B cell (primary cell): ENCODE measurements at regions of chr14 and their contacts with region 1.

Region 1: DNA sequence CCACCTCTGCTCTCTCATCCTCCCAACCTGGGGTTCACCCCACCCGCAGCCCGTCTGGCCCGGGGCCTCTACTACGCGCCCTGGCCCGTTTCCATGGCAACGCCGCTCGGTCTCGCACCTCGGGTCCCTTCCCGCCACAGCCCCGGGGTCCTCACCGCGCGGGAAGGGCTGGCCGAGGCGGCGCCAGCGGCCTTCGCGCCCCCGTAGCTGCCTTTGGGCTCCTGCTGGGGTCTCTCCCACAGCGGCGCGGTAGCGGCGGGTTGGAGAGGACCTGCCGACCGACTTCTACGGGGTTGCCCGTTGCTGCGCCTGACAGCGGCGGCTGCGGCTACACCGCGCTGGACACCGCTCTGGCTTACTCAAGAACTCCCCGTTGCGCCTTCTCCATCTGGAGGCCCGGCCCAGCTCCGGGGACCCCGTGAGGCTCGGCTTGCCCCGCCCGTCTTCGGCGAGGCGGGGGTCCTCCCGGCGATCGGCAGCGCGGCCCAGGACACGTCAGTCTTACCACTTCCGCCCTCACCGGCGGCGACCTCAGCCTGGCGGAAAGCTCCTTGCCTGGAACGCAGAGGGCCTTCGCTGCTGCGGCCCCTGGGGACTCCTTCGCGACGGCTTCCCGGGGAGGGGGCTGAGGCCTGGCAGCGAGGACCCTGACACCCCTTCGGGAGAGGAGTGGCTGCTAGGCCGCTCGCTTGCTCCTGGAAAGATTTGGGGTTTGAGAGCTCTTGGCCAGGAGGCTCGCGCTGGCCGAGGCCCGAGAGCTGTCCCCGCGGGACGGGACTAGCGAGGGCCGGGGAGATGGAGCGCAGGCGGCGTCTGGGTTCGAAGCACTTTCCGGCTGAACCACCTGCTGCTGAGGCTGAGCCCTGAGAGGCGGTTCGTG is at the start of gene TM9SF1:
- DNase-seq: peak; percentile 96
- ATAC-seq: peak; percentile 90
- H3K4me3 ChIP-seq: peak within 1 kb of the TSS; percentile 82 to 99 (median 83)
- H3K4me3 Mint-ChIP-seq: peak within 1 kb of the TSS; percentile 89
- H3K27ac ChIP-seq: peak within 1 kb of the TSS; percentile 98 to 99
- H3K27ac Mint-ChIP-seq: peak within 1 kb of the TSS; percentile 99
- H3K4me1 ChIP-seq: peaks cover 25 to 26% of the 10 kb centered on the region in 2 donors
- H3K4me1 Mint-ChIP-seq: peaks cover 49% of the 10 kb centered on the region
- H3K27me3 ChIP-seq: no peaks in the 10 kb centered on the region
- H3K27me3 Mint-ChIP-seq: no peaks in the 10 kb centered on the region
- CTCF ChIP-seq: no peak
- total RNA-seq, gene TM9SF1: 24.5 and 33.9 TPM in 2 replicates

Region 2: DNA sequence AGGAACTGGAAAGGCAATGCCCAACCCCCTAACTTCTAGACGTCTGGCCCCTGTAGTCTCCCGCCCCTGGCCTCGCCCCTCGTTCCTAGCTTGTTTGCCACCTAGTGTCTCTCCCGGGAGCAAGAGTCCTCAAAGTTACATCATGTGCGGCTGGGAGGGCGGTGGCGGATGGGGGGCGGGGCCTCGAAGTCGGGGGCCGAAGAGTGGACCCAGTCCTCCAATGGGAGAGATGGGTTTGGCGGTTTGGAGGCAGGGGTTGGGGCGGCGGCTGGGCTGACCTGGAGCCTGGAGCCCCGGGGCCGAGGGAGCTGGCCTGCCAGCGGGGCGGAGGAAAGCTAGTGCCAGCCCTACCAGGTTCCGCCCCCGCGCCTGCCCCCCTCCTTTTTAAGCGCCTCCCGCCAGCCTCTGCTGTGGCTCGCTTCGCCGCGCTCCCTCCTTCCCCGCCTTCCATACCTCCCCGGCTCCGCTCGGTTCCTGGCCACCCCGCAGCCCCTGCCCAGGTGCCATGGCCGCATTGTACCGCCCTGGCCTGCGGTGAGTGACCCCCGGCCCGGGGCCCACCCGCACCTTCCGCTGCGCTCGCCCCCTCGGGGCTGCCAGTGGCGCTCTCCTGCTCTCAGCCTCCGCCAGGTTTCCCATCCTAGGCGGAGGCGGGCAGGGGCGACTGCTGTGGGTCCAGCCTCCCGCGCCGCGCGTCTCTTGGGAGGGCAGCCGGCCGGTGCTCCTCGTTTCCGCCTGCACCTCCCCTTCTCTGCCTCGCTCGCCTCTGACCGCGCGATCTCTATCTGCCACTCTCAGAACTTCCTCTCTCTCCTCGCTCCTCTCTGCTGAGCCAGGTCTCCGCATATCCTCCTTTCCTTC is 101.3 kb before region 1 on chr14 and contains the start of gene PCK2:
- CTCF ChIA-PET with region 1: interaction called, 3 read pairs
- POLR2A ChIA-PET with region 1: no interaction called
- intact Hi-C with region 1: loop called (anchors 1 kb)
- DNase-seq: peak; percentile 81
- ATAC-seq: peak; percentile 66
- H3K4me3 ChIP-seq: peak within 1 kb of the TSS; percentile 62 to 97 (median 89)
- H3K4me3 Mint-ChIP-seq: peak within 1 kb of the TSS; percentile 95
- H3K27ac ChIP-seq: peak within 1 kb of the TSS; percentile 80 to 95
- H3K27ac Mint-ChIP-seq: peak within 1 kb of the TSS; percentile 92
- H3K4me1 ChIP-seq: peaks cover 5 to 35% of the 10 kb centered on the region in 2 donors
- H3K4me1 Mint-ChIP-seq: peaks cover 38% of the 10 kb centered on the region
- H3K27me3 ChIP-seq: no peaks in the 10 kb centered on the region
- H3K27me3 Mint-ChIP-seq: no peaks in the 10 kb centered on the region
- CTCF ChIP-seq: peak; percentile 28
- total RNA-seq, gene PCK2: 34.1 and 40.4 TPM in 2 replicates

Region 3: GRCh38 chr14:24141097-24141880 is 54.1 kb before region 1 on chr14 and contains the start of gene EMC9:
- CTCF ChIA-PET with region 1: no interaction called
- POLR2A ChIA-PET with region 1: interaction called, 13 read pairs
- intact Hi-C with region 1: loop called (anchors 1 kb)
- DNase-seq: peak; percentile 99
- ATAC-seq: peak; percentile 89
- H3K4me3 ChIP-seq: peak within 1 kb of the TSS; percentile 67 to 93 (median 82)
- H3K4me3 Mint-ChIP-seq: peak within 1 kb of the TSS; percentile 96
- H3K27ac ChIP-seq: peak within 1 kb of the TSS; percentile 63 to 80
- H3K27ac Mint-ChIP-seq: peak within 1 kb of the TSS; percentile 95
- H3K4me1 ChIP-seq: peaks cover 33 to 50% of the 10 kb centered on the region in 2 donors
- H3K4me1 Mint-ChIP-seq: peaks cover 64% of the 10 kb centered on the region
- H3K27me3 ChIP-seq: no peaks in the 10 kb centered on the region
- H3K27me3 Mint-ChIP-seq: no peaks in the 10 kb centered on the region
- CTCF ChIP-seq: peak; percentile 37
- total RNA-seq, gene EMC9: 24.7 and 26.4 TPM in 2 replicates

Region 4: DNA sequence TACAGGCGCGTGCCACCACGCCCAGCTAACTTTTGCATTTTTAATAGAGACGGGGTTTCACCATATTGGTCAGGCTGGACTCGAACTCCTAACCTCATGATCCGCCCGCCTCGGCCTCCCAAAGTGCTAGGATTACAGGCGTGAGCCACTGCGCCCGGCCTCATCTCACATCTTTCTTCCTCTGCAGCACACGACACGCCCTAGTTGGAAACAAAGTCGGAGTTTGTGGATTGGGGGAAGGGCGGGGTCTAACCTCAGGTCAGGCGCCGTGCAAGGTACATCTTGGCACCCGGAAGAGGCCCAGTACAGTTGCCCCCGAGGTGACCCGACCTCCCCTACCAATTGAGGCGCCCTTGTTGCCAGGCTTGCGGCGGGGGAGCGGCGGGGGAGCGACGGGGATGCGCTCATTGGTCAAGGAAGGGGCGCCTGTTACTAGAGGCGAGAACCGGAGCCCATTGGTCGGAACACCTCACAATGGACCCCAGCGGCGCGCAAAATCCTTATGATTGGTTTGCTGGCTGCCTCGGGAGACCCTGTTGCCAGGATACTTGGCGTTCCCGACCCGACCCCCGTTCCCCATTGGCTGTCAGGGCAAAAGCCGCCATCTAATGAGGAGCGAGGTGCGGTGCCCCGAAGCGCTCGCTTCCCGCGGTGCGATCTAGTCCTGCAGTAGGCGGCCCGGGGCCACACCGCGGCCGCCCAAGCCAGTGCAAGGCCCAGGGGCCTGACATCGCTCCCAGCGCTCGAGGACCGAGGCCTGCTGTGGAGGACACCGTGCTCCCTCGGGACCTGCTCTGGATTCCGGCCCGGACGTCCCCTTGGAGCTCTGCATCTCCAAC is 23.8 kb before region 1 on chr14 and contains the start of gene REC8:
- CTCF ChIA-PET with region 1: no interaction called
- POLR2A ChIA-PET with region 1: interaction called, 17 read pairs
- intact Hi-C with region 1: no loop called
- DNase-seq: peak; percentile 89
- ATAC-seq: peak; percentile 92
- H3K4me3 ChIP-seq: peak within 1 kb of the TSS; percentile 47 to 72 (median 60)
- H3K4me3 Mint-ChIP-seq: peak within 1 kb of the TSS; percentile 93
- H3K27ac ChIP-seq: no peak within 1 kb of the TSS
- H3K27ac Mint-ChIP-seq: peak within 1 kb of the TSS; percentile 79
- H3K4me1 ChIP-seq: peaks cover 11 to 23% of the 10 kb centered on the region in 2 donors
- H3K4me1 Mint-ChIP-seq: peaks cover 20% of the 10 kb centered on the region
- H3K27me3 ChIP-seq: no peaks in the 10 kb centered on the region
- H3K27me3 Mint-ChIP-seq: no peaks in the 10 kb centered on the region
- CTCF ChIP-seq: no peak
- total RNA-seq, gene REC8: 48.4 and 62.1 TPM in 2 replicates

Region 5: DNA sequence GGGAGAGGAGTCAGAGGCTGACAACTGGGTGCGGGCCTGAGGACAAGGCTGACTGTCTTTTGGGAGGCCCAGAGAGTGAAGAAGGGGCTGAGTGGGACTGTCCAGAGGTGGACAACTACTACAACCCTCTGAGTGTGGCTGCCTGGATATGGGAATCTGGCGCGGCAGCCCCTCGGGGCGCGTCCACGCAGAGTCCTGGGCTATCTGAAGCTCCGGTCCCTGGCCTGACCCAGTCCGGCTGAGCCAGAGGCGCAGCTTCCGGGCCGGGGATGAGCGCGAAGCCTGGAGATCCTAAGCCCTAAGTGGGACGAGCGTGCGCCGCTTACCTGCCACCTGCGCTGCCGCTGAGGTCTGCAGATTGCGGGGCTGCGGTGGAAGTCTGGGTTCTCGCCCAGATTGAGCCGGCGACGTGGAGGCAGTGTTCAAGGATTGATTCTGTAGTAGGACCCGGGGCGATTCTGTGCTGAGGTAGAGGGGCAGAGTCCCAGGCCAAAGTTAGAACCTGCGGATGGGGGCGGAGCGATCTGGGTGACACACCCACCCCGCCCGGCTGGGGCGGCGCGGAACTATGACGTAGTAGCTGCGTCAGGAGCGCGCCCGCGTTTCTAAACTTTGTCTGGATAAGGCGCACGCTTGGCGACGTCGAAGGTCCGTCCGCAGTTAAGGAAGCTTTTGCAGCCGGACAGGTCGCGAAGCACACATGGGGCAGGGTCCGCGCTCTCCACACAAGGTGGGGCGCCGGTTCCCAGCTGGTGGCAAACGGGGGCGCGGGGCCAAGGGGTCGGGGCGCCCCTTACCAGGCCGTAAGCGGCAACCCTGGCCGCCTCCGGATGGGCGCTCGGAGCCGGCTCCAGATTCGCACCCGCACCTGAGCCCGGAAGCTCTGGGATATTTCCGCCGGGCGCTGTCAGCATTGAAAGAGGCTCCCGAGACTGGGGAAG is 104.1 kb after region 1 on chr14 and contains the starts of genes DHRS1 and NOP9:
- CTCF ChIA-PET with region 1: interaction called, 7 read pairs
- POLR2A ChIA-PET with region 1: no interaction called
- intact Hi-C with region 1: loop called (anchors 5 kb)
- DNase-seq: peak; percentile 95
- ATAC-seq: peak; percentile 86
- H3K4me3 ChIP-seq: peak within 1 kb of the TSS; percentile 58 to 93 (median 77)
- H3K4me3 Mint-ChIP-seq: peak within 1 kb of the TSS; percentile 96
- H3K27ac ChIP-seq: peak within 1 kb of the TSS; percentile 79 to 83
- H3K27ac Mint-ChIP-seq: peak within 1 kb of the TSS; percentile 98
- H3K4me1 ChIP-seq: peaks cover 30 to 41% of the 10 kb centered on the region in 2 donors
- H3K4me1 Mint-ChIP-seq: peaks cover 48% of the 10 kb centered on the region
- H3K27me3 ChIP-seq: no peaks in the 10 kb centered on the region
- H3K27me3 Mint-ChIP-seq: no peaks in the 10 kb centered on the region
- CTCF ChIP-seq: no peak
- total RNA-seq, gene DHRS1: 42.7 and 43.7 TPM in 2 replicates
- total RNA-seq, gene NOP9: 22.6 and 24.5 TPM in 2 replicates